Head of caudate nucleus (tissue), 42 donors: ENCODE measurements at regions of chr3 and their contacts with region 1.

Region 1: DNA sequence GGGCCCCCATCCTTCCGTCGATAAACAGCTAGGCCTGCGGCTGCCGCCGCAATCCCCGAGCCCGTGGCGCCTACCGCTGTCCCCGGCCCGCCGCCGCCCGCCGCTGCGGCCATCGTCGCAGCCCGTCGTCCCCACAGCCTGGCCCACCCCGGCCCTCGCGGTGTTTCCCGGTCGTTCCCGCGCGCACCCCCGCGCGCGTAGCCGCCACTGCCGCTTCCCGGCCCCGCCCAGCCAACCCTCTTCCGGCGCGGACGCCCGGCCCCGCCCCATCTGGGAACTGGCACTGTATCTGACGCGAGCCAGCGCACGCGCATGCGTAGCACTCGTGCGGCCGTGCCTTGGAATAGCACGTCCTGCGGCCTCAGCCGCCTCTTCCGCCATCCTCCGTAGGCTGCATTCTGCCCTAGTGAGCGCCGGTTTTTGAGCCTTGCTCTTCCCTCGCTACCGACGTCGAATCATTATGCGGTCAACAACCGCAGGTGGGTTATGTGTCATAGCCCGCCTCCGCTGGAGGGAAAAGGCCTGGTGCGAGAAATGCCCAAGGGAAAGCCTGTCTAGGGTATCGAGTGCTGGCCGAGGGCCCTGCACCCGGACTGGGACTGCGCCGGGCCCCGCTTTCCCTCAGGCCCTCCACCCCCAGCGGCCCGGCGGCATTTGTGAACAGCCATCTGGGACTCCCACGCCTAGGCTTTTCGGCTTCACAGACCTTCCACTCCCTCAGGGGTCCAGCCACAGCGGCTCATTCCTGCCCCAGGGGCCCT is at the start of gene SMARCC1:
- DNase-seq: peak; percentile 92 to 99 (median 98)

Region 2: GRCh38 chr3:47513125-47513929 is 268.5 kb before region 1 on chr3 and contains the start of gene ELP6:
- intact Hi-C with region 1: loop called (anchors 2 kb)
- DNase-seq: peak; percentile 92 to 99 (median 97)

Region 3: DNA sequence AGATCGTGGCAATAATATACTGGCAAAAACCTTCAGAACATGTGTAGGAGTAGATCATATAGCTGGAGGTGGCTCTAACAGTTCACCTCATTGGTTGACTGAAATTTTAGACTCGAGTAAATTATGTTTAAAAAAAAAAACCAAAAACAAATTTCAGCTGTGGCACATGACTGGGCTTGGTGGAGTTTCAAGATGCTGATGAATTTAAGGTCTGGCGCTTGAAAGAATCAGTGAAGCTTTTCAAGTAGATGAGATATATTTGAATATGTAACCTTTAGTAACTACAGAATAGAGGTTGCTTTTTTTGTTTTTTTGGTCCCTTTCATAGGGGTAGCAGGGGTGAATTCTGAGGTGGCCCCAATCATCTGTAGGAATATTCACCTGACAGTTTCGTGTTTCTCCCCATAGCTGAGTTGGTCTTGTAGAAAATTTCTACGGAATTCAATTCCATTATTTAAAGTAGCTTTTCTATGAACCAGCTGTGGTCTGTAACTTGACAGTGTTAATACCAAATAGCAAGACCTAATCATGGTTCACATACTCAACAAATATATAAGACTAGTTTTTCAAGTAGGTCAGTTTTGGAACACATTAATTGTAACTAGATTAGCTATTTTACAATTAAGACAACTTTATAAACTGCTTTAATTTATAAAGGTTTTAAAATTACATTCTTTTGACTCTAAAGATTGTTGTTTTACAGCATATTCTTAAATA is 168.7 kb after region 1 on chr3:
- intact Hi-C with region 1: no loop called
- DNase-seq: no peak